ENCODE measurements at regions of chr17 and their contacts with region 1.

Region 1: GRCh38 chr17:44210342-44211192 is 8.9 kb downstream of the UBTF start:
- DNase-seq: peak; percentile 87 to 94 (median 91)
- H3K4me3 ChIP-seq: peak overlapping the region; percentile 26
- H3K4me3 Mint-ChIP-seq: peak overlapping the region in 6 of 7 donors; percentile 12 to 57 (median 39)
- H3K27ac ChIP-seq: no peak overlapping the region
- H3K27ac Mint-ChIP-seq: peak overlapping the region; percentile 57 to 96 (median 80)
- H3K4me1 ChIP-seq: peaks cover 51% of the 10 kb centered on the region
- H3K4me1 Mint-ChIP-seq: peaks cover 33 to 58% (median 36%) of the 10 kb centered on the region in 3 donors
- H3K27me3 ChIP-seq: no peaks in the 10 kb centered on the region
- H3K27me3 Mint-ChIP-seq: peaks cover 0 to 3% of the 10 kb centered on the region in 2 donors

Region 2: GRCh38 chr17:44086364-44087311 is 123.9 kb before region 1 on chr17:
- CTCF ChIA-PET with region 1: no interaction called
- POLR2A ChIA-PET with region 1: no interaction called
- DNase-seq: peak in 1 of 5 donors; percentile 60
- H3K4me3 ChIP-seq: no peak overlapping the region
- H3K4me3 Mint-ChIP-seq: no peak overlapping the region
- H3K27ac ChIP-seq: peak overlapping the region; percentile 51
- H3K27ac Mint-ChIP-seq: peak overlapping the region in 4 of 8 donors; percentile 3 to 50 (median 28)
- H3K4me1 ChIP-seq: no peaks in the 10 kb centered on the region
- H3K4me1 Mint-ChIP-seq: peaks cover 0 to 11% (median 0%) of the 10 kb centered on the region in 3 donors
- H3K27me3 ChIP-seq: no peaks in the 10 kb centered on the region
- H3K27me3 Mint-ChIP-seq: no peaks in the 10 kb centered on the region

Region 3: GRCh38 chr17:44199553-44200477 is 10.8 kb before region 1 on chr17 and contains the start of gene ATXN7L3:
- CTCF ChIA-PET with region 1: interaction called, 28 read pairs
- POLR2A ChIA-PET with region 1: interaction called, 3 read pairs
- DNase-seq: peak; percentile 96 to 100 (median 99)
- H3K4me3 ChIP-seq: peak within 1 kb of the TSS; percentile 84
- H3K4me3 Mint-ChIP-seq: peak within 1 kb of the TSS; percentile 87 to 96 (median 91)
- H3K27ac ChIP-seq: peak within 1 kb of the TSS; percentile 76
- H3K27ac Mint-ChIP-seq: peak within 1 kb of the TSS; percentile 86 to 98 (median 94)
- H3K4me1 ChIP-seq: peaks cover 30% of the 10 kb centered on the region
- H3K4me1 Mint-ChIP-seq: peaks cover 38 to 51% (median 41%) of the 10 kb centered on the region in 3 donors
- H3K27me3 ChIP-seq: no peaks in the 10 kb centered on the region
- H3K27me3 Mint-ChIP-seq: peaks cover 0 to 1% of the 10 kb centered on the region in 2 donors
- total RNA-seq, gene ATXN7L3: 96.6 to 111 TPM

Region 4: GRCh38 chr17:44247440-44247841 is 36.9 kb after region 1 on chr17:
- CTCF ChIA-PET with region 1: interaction called, 16 read pairs
- POLR2A ChIA-PET with region 1: interaction called, 8 read pairs
- DNase-seq: no peak
- H3K4me3 ChIP-seq: no peak overlapping the region
- H3K4me3 Mint-ChIP-seq: no peak overlapping the region
- H3K27ac ChIP-seq: peak overlapping the region; percentile 16
- H3K27ac Mint-ChIP-seq: peak overlapping the region in 7 of 8 donors; percentile 26 to 87 (median 79)
- H3K4me1 ChIP-seq: peaks cover 45% of the 10 kb centered on the region
- H3K4me1 Mint-ChIP-seq: peaks cover 38 to 52% (median 42%) of the 10 kb centered on the region in 3 donors
- H3K27me3 ChIP-seq: no peaks in the 10 kb centered on the region
- H3K27me3 Mint-ChIP-seq: no peaks in the 10 kb centered on the region

Region 5: DNA sequence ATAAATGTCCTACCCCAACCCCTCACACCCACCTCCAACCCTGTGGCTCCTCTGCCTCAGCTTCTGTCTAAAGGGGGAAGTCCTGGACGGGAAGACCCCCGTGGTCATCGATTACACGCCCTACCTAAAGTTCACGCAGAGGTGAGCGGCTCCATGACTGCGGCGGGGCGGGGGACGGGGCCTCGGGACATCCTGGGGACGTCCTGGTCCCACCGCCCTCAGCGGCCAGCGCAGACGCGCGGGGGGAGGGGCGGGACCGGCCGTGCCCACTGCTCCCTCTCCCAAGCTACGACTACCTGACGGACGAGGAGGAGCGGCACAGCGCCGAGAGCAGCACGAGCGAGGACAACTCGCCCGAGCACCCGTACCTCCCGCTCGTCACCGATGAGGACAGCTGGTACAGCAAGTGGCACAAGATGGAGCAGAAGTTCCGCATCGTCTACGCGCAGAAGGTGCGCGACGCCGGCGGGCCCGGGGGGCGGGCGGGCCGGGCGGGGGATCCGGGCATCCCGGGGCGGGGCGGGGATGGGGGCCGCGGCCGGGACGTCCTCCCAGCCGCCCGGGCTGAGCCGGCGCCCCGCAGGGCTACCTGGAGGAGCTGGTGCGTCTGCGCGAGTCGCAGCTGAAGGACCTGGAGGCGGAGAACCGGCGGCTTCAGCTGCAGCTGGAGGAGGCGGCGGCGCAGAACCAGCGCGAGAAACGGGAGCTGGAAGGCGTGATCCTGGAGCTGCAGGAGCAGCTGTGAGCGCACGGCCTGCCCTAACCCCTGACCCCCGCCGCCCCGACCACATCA is 104.5 kb after region 1 on chr17:
- CTCF ChIA-PET with region 1: interaction called, 20 read pairs
- POLR2A ChIA-PET with region 1: interaction called, 6 read pairs
- DNase-seq: peak in 3 of 5 donors; percentile 14 to 56 (median 30)
- H3K4me3 ChIP-seq: peak overlapping the region; percentile 54
- H3K4me3 Mint-ChIP-seq: peak overlapping the region in 6 of 7 donors; percentile 34 to 74 (median 70)
- H3K27ac ChIP-seq: no peak overlapping the region
- H3K27ac Mint-ChIP-seq: no peak overlapping the region
- H3K4me1 ChIP-seq: peaks cover 11% of the 10 kb centered on the region
- H3K4me1 Mint-ChIP-seq: peaks cover 9 to 17% (median 14%) of the 10 kb centered on the region in 3 donors
- H3K27me3 ChIP-seq: peaks cover 28% of the 10 kb centered on the region
- H3K27me3 Mint-ChIP-seq: peaks cover 30 to 39% of the 10 kb centered on the region in 2 donors

Region 6: GRCh38 chr17:44331249-44331760 is 120.7 kb after region 1 on chr17:
- CTCF ChIA-PET with region 1: interaction called, 100 read pairs
- POLR2A ChIA-PET with region 1: interaction called, 41 read pairs
- DNase-seq: peak; percentile 50 to 79 (median 69)
- H3K4me3 ChIP-seq: no peak overlapping the region
- H3K4me3 Mint-ChIP-seq: peak overlapping the region in 1 of 7 donors; percentile 67
- H3K27ac ChIP-seq: no peak overlapping the region
- H3K27ac Mint-ChIP-seq: peak overlapping the region in 3 of 8 donors; percentile 7 to 65 (median 47)
- H3K4me1 ChIP-seq: peaks cover 4% of the 10 kb centered on the region
- H3K4me1 Mint-ChIP-seq: peaks cover 14 to 16% (median 16%) of the 10 kb centered on the region in 3 donors
- H3K27me3 ChIP-seq: no peaks in the 10 kb centered on the region
- H3K27me3 Mint-ChIP-seq: peaks cover 0 to 4% of the 10 kb centered on the region in 2 donors

Region 7: GRCh38 chr17:44350733-44351226 is 140.2 kb after region 1 on chr17:
- CTCF ChIA-PET with region 1: interaction called, 54 read pairs
- POLR2A ChIA-PET with region 1: interaction called, 16 read pairs
- DNase-seq: peak; percentile 49 to 75 (median 60)
- H3K4me3 ChIP-seq: no peak overlapping the region
- H3K4me3 Mint-ChIP-seq: peak overlapping the region in 2 of 7 donors; percentile 32 to 45
- H3K27ac ChIP-seq: no peak overlapping the region
- H3K27ac Mint-ChIP-seq: no peak overlapping the region
- H3K4me1 ChIP-seq: peaks cover 11% of the 10 kb centered on the region
- H3K4me1 Mint-ChIP-seq: peaks cover 12 to 30% (median 17%) of the 10 kb centered on the region in 3 donors
- H3K27me3 ChIP-seq: no peaks in the 10 kb centered on the region
- H3K27me3 Mint-ChIP-seq: peaks cover 0 to 4% of the 10 kb centered on the region in 2 donors